Activated CD8-positive, alpha-beta memory T cell treated with anti-CD3 and anti-CD28 coated beads, Interleukin-2, amount 10 ng/mL, durations not matched to agents 7 days and 5 days (primary cell): ENCODE measurements at regions of chr17 and their contacts with region 1.

Region 1: GRCh38 chr17:8222630-8223356 is 12.4 kb upstream of the AURKB start:
- DNase-seq: peak; percentile 94
- ATAC-seq: peak; percentile 52
- H3K4me3 Mint-ChIP-seq: peak overlapping the region; percentile 95
- H3K27ac Mint-ChIP-seq: peak overlapping the region; percentile 97
- H3K4me1 Mint-ChIP-seq: peaks cover 51% of the 10 kb centered on the region
- H3K27me3 Mint-ChIP-seq: no peaks in the 10 kb centered on the region

Region 2: GRCh38 chr17:8138672-8139371 is 84.0 kb before region 1 on chr17:
- CTCF ChIA-PET with region 1: interaction called, 29 read pairs
- DNase-seq: peak; percentile 98
- ATAC-seq: peak; percentile 95
- H3K4me3 Mint-ChIP-seq: no peak overlapping the region
- H3K27ac Mint-ChIP-seq: no peak overlapping the region
- H3K4me1 Mint-ChIP-seq: peaks cover 2% of the 10 kb centered on the region
- H3K27me3 Mint-ChIP-seq: peaks cover 5% of the 10 kb centered on the region

Region 3: GRCh38 chr17:8204761-8205555 is 17.8 kb before region 1 on chr17:
- CTCF ChIA-PET with region 1: interaction called, 25 read pairs
- DNase-seq: no peak
- ATAC-seq: no peak
- H3K4me3 Mint-ChIP-seq: no peak overlapping the region
- H3K27ac Mint-ChIP-seq: no peak overlapping the region
- H3K4me1 Mint-ChIP-seq: peaks cover 40% of the 10 kb centered on the region
- H3K27me3 Mint-ChIP-seq: no peaks in the 10 kb centered on the region

Region 4: GRCh38 chr17:8243827-8244226 is 21.0 kb after region 1 on chr17:
- CTCF ChIA-PET with region 1: interaction called, 61 read pairs
- DNase-seq: peak; percentile 51
- ATAC-seq: no peak
- H3K4me3 Mint-ChIP-seq: no peak overlapping the region
- H3K27ac Mint-ChIP-seq: peak overlapping the region; percentile 64
- H3K4me1 Mint-ChIP-seq: peaks cover 33% of the 10 kb centered on the region
- H3K27me3 Mint-ChIP-seq: no peaks in the 10 kb centered on the region

Region 5: GRCh38 chr17:8255499-8255898 is 32.7 kb after region 1 on chr17:
- CTCF ChIA-PET with region 1: no interaction called
- DNase-seq: no peak
- ATAC-seq: no peak
- H3K4me3 Mint-ChIP-seq: no peak overlapping the region
- H3K27ac Mint-ChIP-seq: no peak overlapping the region
- H3K4me1 Mint-ChIP-seq: peaks cover 3% of the 10 kb centered on the region
- H3K27me3 Mint-ChIP-seq: no peaks in the 10 kb centered on the region

Region 6: DNA sequence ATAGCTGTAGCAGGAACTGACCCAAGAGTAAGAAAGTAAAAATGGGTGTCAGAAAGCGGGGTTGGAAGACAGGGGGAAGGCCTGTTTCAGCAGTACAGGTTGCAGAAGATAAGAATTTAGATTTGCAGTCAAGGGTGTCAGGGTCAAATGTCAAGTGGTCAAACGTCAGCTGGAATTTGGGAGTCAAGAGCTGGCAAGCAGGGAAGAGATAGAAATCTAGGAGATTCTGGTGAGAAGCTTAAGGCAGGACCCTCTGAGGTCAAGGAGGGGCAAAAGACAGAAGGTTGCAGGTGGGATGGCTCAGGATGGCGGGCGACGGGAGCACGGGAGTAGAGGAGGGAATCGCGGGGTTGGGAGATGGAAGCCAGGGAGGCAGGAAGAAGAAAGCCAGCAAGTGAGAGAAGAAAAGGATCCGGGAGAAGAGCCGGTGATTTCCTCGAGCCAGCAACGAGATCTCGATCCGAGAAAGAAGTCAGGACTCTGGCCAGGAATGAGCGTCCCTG is 72.1 kb after region 1 on chr17:
- CTCF ChIA-PET with region 1: interaction called, 22 read pairs
- DNase-seq: no peak
- ATAC-seq: no peak
- H3K4me3 Mint-ChIP-seq: peak overlapping the region; percentile 90
- H3K27ac Mint-ChIP-seq: peak overlapping the region; percentile 95
- H3K4me1 Mint-ChIP-seq: peaks cover 39% of the 10 kb centered on the region
- H3K27me3 Mint-ChIP-seq: no peaks in the 10 kb centered on the region